ENCODE measurements at regions of chr7 and their contacts with region 1.

Region 1: DNA sequence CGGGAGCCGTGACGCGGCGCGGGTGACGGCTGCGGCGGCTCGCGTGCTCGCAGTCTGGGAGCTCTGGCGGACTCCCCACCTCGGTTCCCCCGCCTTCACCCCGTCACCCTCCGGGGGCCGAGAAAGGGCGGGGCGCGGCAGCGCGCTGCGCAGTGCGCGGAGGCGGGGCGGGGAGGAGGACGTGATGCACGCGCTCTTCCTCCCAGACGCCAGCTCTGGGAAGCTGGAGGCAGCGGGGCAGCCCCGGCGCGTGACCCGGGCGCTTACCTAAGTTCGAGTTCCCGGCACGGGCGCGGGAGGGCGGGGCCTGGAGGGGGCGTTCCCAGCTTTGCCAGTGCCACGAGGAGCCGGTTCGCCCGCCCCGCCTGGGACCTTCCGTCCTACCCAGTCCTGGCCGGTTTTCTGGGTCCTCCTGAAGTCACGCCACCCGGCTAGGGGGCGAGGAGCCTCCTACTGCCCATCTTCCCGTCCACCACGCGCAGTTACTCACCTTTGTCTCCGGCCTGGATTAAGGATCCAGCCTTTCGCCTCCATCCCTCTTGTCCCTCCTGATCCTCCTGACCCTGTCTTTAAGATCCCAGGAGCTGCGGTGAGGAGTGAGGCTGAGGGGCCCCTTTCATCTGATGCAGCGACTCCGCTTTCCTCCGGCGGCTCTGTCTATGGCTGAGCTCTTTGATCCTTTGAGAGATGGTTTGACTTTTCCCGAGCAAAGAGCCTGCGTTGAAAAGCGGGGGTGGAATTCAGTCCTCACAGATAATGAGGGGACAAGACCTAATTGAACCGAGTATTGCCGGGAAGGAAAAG is 470 bp upstream of the NAMPT start:
- DNase-seq: peak; percentile 93
- ATAC-seq: peak; percentile 89
- H3K4me3 Mint-ChIP-seq: peak overlapping the region; percentile 99
- H3K27ac Mint-ChIP-seq: peak overlapping the region; percentile 99
- H3K4me1 Mint-ChIP-seq: peaks cover 31% of the 10 kb centered on the region
- H3K27me3 Mint-ChIP-seq: no peaks in the 10 kb centered on the region

Region 2: GRCh38 chr7:106187613-106188350 is 97.5 kb before region 1 on chr7:
- POLR2A ChIA-PET with region 1: no interaction called
- DNase-seq: no peak
- ATAC-seq: no peak
- H3K4me3 Mint-ChIP-seq: no peak overlapping the region
- H3K27ac Mint-ChIP-seq: no peak overlapping the region
- H3K4me1 Mint-ChIP-seq: peaks cover 11% of the 10 kb centered on the region
- H3K27me3 Mint-ChIP-seq: peaks cover 13% of the 10 kb centered on the region

Region 3: DNA sequence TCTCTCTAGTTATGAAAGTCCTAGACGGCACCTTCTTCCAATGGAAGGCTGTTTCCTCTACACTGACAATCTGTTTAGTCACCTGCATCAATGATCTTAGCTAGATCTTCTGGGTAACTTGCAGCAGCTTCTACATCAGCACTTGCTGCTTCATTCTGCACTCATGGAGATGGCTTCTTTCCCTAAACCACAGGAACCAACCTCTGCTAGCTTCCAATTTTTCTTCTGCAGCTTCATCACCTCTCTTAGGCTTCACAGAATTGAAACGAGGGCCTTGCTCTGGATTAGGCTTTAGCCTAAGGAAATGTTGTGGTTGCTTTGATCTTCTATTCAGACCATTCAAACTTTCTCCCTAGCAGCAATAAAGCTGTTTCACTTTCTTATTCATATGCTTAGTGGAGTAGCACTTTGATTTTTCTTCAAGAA is 25.1 kb before region 1 on chr7:
- POLR2A ChIA-PET with region 1: interaction called, 10 read pairs
- DNase-seq: no peak
- ATAC-seq: peak; percentile 85
- H3K4me3 Mint-ChIP-seq: peak overlapping the region; percentile 69
- H3K27ac Mint-ChIP-seq: peak overlapping the region; percentile 72
- H3K4me1 Mint-ChIP-seq: peaks cover 16% of the 10 kb centered on the region
- H3K27me3 Mint-ChIP-seq: no peaks in the 10 kb centered on the region

Region 4: GRCh38 chr7:106273009-106273668 is 12.1 kb before region 1 on chr7:
- POLR2A ChIA-PET with region 1: no interaction called
- DNase-seq: no peak
- ATAC-seq: no peak
- H3K4me3 Mint-ChIP-seq: no peak overlapping the region
- H3K27ac Mint-ChIP-seq: no peak overlapping the region
- H3K4me1 Mint-ChIP-seq: peaks cover 13% of the 10 kb centered on the region
- H3K27me3 Mint-ChIP-seq: no peaks in the 10 kb centered on the region

Measured in activated naive CD8-positive, alpha-beta T cell treated with anti-CD3 and anti-CD28 coated beads, Interleukin-2, amount 10 ng/mL, durations not matched to agents 7 days and 5 days (primary cell).